GM12878 (cell line): ENCODE measurements at regions of chr6 and their contacts with region 1.

Region 1: DNA sequence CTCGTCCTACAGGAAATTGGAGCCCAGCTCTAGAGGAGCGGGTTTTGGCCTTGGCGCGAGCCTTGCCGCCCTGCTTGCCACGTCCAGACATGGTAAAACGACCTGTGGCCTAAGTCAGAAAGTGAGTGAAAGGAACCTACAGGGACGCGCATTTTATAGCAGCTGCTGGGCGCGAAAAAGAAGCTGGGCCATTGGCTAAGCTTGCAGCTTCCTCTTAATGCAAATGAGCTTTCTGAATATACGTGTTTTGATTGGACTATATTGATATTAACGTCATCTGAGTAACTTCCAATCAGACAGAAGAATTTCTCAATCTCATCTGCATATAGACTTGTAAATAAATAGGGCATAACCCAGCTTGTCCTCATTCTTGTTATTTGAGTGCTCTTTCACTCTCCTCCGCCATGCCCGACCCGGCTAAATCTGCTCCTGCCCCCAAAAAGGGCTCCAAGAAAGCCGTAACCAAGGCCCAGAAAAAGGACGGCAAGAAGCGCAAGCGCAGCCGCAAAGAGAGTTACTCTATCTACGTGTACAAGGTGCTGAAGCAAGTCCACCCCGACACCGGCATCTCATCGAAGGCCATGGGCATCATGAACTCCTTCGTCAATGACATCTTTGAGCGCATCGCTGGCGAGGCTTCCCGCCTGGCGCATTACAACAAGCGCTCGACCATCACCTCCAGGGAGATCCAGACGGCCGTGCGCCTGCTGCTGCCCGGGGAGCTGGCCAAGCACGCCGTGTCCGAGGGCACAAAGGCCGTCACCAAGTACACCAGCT is 18.9 kb downstream of the OR2B2 start:
- DNase-seq: peak; percentile 98
- ATAC-seq: peak; percentile 60
- H3K4me3 ChIP-seq: peak overlapping the region; percentile 97
- H3K27ac ChIP-seq: peak overlapping the region; percentile 92
- H3K4me1 ChIP-seq: peaks cover 13% of the 10 kb centered on the region; the same call in 1 of the 2 replicates
- H3K27me3 ChIP-seq: no peaks in the 10 kb centered on the region
- CTCF ChIP-seq: no peak
- EP300 ChIP-seq: no peak
- POLR2A ChIP-seq: peak; percentile 96
- RAD21 ChIP-seq: no peak

Region 2: GRCh38 chr6:26031595-26032339 is 1861.5 kb before region 1 on chr6:
- CTCF ChIA-PET with region 1: no interaction called
- POLR2A ChIA-PET with region 1: interaction called, 4 read pairs
- RAD21 ChIA-PET with region 1: interaction called, 3 read pairs
- SMC1A ChIA-PET with region 1: no interaction called
- in situ Hi-C with region 1: loop called (anchors 5 kb)
- intact Hi-C with region 1: loop called (anchors 2 kb)
- DNase-seq: peak; percentile 97
- ATAC-seq: peak; percentile 70
- H3K4me3 ChIP-seq: peak overlapping the region; percentile 75
- H3K27ac ChIP-seq: peak overlapping the region; percentile 95
- H3K4me1 ChIP-seq: peaks cover 9% of the 10 kb centered on the region; the same call in 1 of the 2 replicates
- H3K27me3 ChIP-seq: no peaks in the 10 kb centered on the region
- CTCF ChIP-seq: 0 out of 6 replicates have a peak, but pooled peaks of 1 of the 3 experiments have one; percentile 11
- EP300 ChIP-seq: peak in 1 of 2 experiments; percentile 10; a peak in 1 of 4 replicates
- POLR2A ChIP-seq: peak; percentile 96
- RAD21 ChIP-seq: no peak

Region 3: DNA sequence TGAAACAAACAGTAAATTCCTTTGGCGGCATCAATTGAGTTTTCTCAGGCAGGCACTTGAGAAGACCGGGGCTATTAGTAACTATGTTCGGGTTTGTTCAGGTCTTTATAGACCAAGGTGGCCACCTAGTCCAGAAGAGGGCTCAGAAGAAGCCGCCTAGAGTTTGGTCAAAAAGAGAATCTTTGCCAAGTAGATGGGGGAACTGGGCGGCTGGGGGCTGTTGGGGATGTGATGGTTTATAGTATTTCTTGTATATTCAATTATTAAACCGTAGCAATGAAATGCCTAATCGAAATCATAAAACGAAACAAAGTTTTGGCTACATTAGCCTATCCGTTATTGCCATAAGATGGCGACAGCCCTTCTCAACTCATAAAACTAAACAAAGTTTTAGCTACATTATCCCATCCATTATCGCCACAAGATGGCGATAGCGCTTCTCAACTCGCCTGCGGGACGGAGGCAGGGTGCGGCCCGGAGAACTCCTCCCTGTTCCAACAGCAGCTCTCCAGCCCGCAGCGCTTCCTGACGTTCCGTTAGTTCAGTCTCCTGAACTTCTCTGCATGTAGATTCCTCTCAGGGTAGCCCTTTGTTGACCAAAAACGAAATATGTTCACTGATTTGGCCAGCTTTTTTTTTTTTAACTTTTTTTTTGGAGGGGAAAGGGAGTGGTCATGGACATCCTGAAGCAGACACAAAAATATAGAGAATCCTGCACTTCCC is 766.3 kb before region 1 on chr6:
- CTCF ChIA-PET with region 1: interaction called, 10 read pairs
- POLR2A ChIA-PET with region 1: interaction called, 8 read pairs
- RAD21 ChIA-PET with region 1: interaction called, 8 read pairs
- SMC1A ChIA-PET with region 1: interaction called, 10 read pairs
- in situ Hi-C with region 1: loop called (anchors 5 kb)
- intact Hi-C with region 1: loop called (anchors 2 kb)
- DNase-seq: peak; percentile 85
- ATAC-seq: peak; percentile 72
- H3K4me3 ChIP-seq: peak overlapping the region; percentile 72
- H3K27ac ChIP-seq: peak overlapping the region; percentile 93
- H3K4me1 ChIP-seq: peaks cover 16% of the 10 kb centered on the region
- H3K27me3 ChIP-seq: no peaks in the 10 kb centered on the region
- CTCF ChIP-seq: peak; percentile 73 to 98 (median 83); a peak in 5 of 6 replicates
- EP300 ChIP-seq: no peak
- POLR2A ChIP-seq: peak; percentile 54
- RAD21 ChIP-seq: peak; percentile 86

Region 4: DNA sequence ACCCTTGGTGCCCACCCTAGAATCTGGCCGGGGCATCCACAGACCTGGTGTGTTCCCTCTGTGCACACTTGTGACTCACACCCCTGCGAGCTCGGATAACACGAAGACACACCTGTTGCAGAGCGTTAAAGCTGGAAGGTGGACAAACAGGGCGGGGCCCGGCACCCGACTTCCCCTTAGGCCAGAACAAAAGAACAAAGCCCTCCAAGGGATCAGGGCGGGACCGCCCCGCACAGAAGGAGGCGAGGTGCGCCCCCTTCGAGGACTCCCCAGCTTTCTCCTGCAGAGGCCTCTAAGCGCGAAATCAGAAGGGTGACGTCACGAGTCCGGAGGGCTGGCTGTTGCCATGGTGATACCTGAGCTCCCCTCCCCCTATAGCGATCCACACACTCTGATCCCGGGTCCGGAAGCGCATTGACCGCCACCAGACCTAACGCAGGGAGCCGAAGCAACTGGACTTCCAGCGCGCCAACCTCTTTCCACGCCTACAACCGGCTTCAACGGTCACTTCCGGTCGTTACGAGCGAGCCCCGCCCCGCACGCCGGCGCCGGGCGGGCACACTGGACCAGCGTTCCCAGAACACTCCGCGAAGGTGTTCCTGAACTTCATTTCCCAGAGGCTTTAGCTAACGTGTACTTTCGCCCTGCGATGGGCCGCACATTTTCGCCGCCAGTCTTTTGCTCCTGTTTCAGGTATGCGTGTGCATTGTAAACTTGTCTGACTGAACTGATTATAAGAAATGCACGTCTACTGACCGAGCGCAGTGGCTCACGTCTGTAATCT is 420.4 kb before region 1 on chr6 and contains the start of gene ZNF184:
- CTCF ChIA-PET with region 1: interaction called, 3 read pairs
- POLR2A ChIA-PET with region 1: interaction called, 5 read pairs
- RAD21 ChIA-PET with region 1: no interaction called
- SMC1A ChIA-PET with region 1: no interaction called
- in situ Hi-C with region 1: loop called (anchors 10 kb)
- intact Hi-C with region 1: loop called (anchors 10 kb)
- DNase-seq: peak; percentile 89
- ATAC-seq: peak; percentile 91
- H3K4me3 ChIP-seq: peak within 1 kb of the TSS; percentile 97
- H3K27ac ChIP-seq: peak within 1 kb of the TSS; percentile 85
- H3K4me1 ChIP-seq: 0 out of 2 replicates have a peak, but pooled peaks cover 3% of the 10 kb centered on the region
- H3K27me3 ChIP-seq: no peaks in the 10 kb centered on the region
- CTCF ChIP-seq: peak in 1 of 3 experiments; percentile 20; a peak in 1 of 6 replicates
- EP300 ChIP-seq: 0 out of 4 replicates have a peak, but pooled peaks of 1 of the 2 experiments have one; percentile 7
- POLR2A ChIP-seq: peak; percentile 79
- RAD21 ChIP-seq: no peak
- polyA plus RNA-seq, gene ZNF184: 4.5 to 5.4 TPM

Region 5: DNA sequence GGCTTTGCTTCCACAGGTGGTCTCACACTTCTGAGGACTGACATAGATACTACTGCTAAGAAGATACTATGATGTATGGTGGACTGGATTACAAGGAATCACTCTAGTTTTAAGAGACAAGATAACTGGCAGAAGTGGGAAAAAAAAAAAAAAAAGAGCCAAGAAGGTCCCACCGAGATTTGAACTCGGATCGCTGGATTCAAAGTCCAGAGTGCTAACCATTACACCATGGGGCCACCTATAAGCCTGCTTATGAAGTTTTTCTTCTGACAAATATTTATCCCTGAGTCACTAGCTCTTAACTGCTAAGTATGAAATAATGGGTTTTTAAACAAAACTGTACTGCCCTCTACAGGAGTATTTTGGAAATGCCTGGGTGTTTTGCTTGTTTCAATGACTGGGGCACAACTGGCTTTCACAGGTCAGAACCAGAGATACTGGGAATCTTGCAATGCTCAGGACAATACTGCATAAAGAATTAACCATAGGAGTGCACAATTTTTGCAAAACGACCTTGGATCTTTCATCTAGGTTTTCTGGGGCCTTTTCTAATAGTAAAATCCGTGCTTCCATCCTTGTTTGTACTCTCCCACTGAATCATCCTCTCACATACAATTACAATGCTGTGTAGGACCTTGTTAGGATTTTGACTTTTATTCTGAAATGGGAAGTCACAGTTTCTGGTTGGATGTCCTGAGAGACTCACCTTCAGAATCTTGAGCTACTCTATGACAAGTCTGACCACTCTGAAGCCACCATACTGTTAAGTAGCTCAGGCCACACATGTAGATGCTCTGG is 97.4 kb before region 1 on chr6:
- CTCF ChIA-PET with region 1: interaction called, 58 read pairs
- POLR2A ChIA-PET with region 1: interaction called, 13 read pairs
- RAD21 ChIA-PET with region 1: interaction called, 80 read pairs
- SMC1A ChIA-PET with region 1: interaction called, 61 read pairs
- in situ Hi-C with region 1: no loop called
- intact Hi-C with region 1: no loop called
- DNase-seq: peak; percentile 91
- ATAC-seq: peak; percentile 62
- H3K4me3 ChIP-seq: no peak overlapping the region
- H3K27ac ChIP-seq: no peak overlapping the region
- H3K4me1 ChIP-seq: peaks cover 22% of the 10 kb centered on the region
- H3K27me3 ChIP-seq: no peaks in the 10 kb centered on the region
- CTCF ChIP-seq: peak; percentile 69 to 80 (median 80)
- EP300 ChIP-seq: peak in 1 of 2 experiments; percentile 75; a peak in 1 of 4 replicates
- POLR2A ChIP-seq: no peak
- RAD21 ChIP-seq: peak; percentile 77

Region 6: GRCh38 chr6:27864906-27865849 is 28.1 kb before region 1 on chr6:
- CTCF ChIA-PET with region 1: interaction called, 19 read pairs
- POLR2A ChIA-PET with region 1: interaction called, 45 read pairs
- RAD21 ChIA-PET with region 1: interaction called, 15 read pairs
- SMC1A ChIA-PET with region 1: interaction called, 21 read pairs
- in situ Hi-C with region 1: no loop called
- intact Hi-C with region 1: no loop called
- DNase-seq: peak; percentile 99
- ATAC-seq: peak; percentile 63
- H3K4me3 ChIP-seq: peak overlapping the region; percentile 75
- H3K27ac ChIP-seq: peak overlapping the region; percentile 95
- H3K4me1 ChIP-seq: peaks cover 39% of the 10 kb centered on the region
- H3K27me3 ChIP-seq: no peaks in the 10 kb centered on the region
- CTCF ChIP-seq: no peak
- EP300 ChIP-seq: no peak
- POLR2A ChIP-seq: peak; percentile 94
- RAD21 ChIP-seq: no peak

Region 7: GRCh38 chr6:28005124-28005890 is 112.1 kb after region 1 on chr6:
- CTCF ChIA-PET with region 1: no interaction called
- POLR2A ChIA-PET with region 1: no interaction called
- RAD21 ChIA-PET with region 1: no interaction called
- SMC1A ChIA-PET with region 1: no interaction called
- in situ Hi-C with region 1: no loop called
- intact Hi-C with region 1: no loop called
- DNase-seq: no peak
- ATAC-seq: no peak
- H3K4me3 ChIP-seq: no peak overlapping the region
- H3K27ac ChIP-seq: no peak overlapping the region
- H3K4me1 ChIP-seq: peaks cover 7% of the 10 kb centered on the region
- H3K27me3 ChIP-seq: no peaks in the 10 kb centered on the region
- CTCF ChIP-seq: no peak
- EP300 ChIP-seq: no peak
- POLR2A ChIP-seq: no peak
- RAD21 ChIP-seq: no peak

Region 8: DNA sequence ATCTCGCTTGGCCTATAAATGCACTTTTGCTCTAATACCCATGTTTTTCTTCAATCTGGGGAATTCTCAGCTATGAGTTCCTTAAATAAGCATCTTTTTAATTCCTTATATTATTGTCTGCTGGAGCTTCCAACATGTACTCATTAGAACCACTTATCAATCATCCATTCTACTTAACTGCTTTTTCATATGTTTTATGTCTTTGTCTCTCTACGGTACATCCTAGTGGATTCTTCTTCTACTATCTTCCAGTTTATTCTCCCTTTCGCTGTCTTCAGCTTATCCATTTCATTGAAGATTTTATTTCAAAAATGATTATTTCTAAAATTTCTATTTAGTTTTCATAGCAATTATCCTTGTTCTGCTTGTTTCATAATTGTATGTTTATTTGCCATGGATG is 218.7 kb after region 1 on chr6:
- CTCF ChIA-PET with region 1: no interaction called
- POLR2A ChIA-PET with region 1: no interaction called
- RAD21 ChIA-PET with region 1: no interaction called
- SMC1A ChIA-PET with region 1: no interaction called
- in situ Hi-C with region 1: no loop called
- intact Hi-C with region 1: no loop called
- DNase-seq: no peak
- ATAC-seq: no peak
- H3K4me3 ChIP-seq: no peak overlapping the region
- H3K27ac ChIP-seq: no peak overlapping the region
- H3K4me1 ChIP-seq: no peaks in the 10 kb centered on the region
- H3K27me3 ChIP-seq: no peaks in the 10 kb centered on the region
- CTCF ChIP-seq: no peak
- EP300 ChIP-seq: no peak
- POLR2A ChIP-seq: no peak
- RAD21 ChIP-seq: no peak